ENCODE measurements at regions of chr11 and their contacts with region 1.

Region 1: GRCh38 chr11:62694455-62695167 is 5.3 kb upstream of the LRRN4CL start:
- DNase-seq: peak; percentile 68
- H3K4me3 ChIP-seq: no peak overlapping the region
- H3K27ac ChIP-seq: no peak overlapping the region
- H3K4me1 ChIP-seq: no peaks in the 10 kb centered on the region
- H3K27me3 ChIP-seq: no peaks in the 10 kb centered on the region
- CTCF ChIP-seq: peak; percentile 80 to 83
- POLR2A ChIP-seq: no peak

Region 2: GRCh38 chr11:61756452-61757212 is 938.0 kb before region 1 on chr11:
- CTCF ChIA-PET with region 1: no interaction called
- POLR2A ChIA-PET with region 1: no interaction called
- dilution Hi-C with region 1: no loop called
- intact Hi-C with region 1: no loop called
- DNase-seq: peak; percentile 14
- H3K4me3 ChIP-seq: no peak overlapping the region
- H3K27ac ChIP-seq: no peak overlapping the region
- H3K4me1 ChIP-seq: peaks cover 12% of the 10 kb centered on the region
- H3K27me3 ChIP-seq: no peaks in the 10 kb centered on the region
- CTCF ChIP-seq: no peak
- POLR2A ChIP-seq: no peak

Region 3: DNA sequence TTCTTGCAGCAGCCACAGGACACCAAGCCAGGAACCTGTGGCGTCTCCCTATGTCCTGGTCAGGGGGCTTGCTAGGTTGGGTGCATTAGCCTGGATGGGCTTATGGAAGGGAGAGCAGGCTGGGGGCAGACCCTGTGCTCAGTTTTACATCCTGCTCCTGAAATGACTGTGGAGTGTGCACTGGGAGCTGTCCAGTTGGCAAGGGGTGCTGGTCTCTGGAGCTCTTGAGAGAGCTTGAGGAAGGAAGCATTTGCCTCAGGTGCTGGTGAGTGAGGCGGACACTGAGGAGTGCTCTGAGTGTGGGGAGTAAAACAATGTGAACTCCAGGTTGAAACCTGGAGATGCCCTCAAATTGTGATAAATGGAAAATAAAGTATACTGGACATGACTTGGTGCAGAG is 399.1 kb before region 1 on chr11:
- CTCF ChIA-PET with region 1: no interaction called
- POLR2A ChIA-PET with region 1: no interaction called
- dilution Hi-C with region 1: no loop called
- intact Hi-C with region 1: no loop called
- DNase-seq: peak; percentile 45
- H3K4me3 ChIP-seq: no peak overlapping the region
- H3K27ac ChIP-seq: no peak overlapping the region
- H3K4me1 ChIP-seq: no peaks in the 10 kb centered on the region
- H3K27me3 ChIP-seq: peaks cover 9 to 10% of the 10 kb centered on the region in 2 experiments
- CTCF ChIP-seq: no peak
- POLR2A ChIP-seq: no peak

Region 4: GRCh38 chr11:62678770-62679696 is 15.6 kb before region 1 on chr11 and contains the start of gene UBXN1:
- CTCF ChIA-PET with region 1: interaction called, 118 read pairs
- POLR2A ChIA-PET with region 1: no interaction called
- dilution Hi-C with region 1: no loop called
- intact Hi-C with region 1: loop called (anchors 2 kb)
- DNase-seq: peak; percentile 89
- H3K4me3 ChIP-seq: peak within 1 kb of the TSS; percentile 76 to 93 (median 79)
- H3K27ac ChIP-seq: peak within 1 kb of the TSS; percentile 74
- H3K4me1 ChIP-seq: peaks cover 11% of the 10 kb centered on the region
- H3K27me3 ChIP-seq: no peaks in the 10 kb centered on the region
- CTCF ChIP-seq: no peak
- POLR2A ChIP-seq: peak; percentile 84
- total RNA-seq, gene UBXN1: 112 and 113 TPM in 2 replicates

Measured in endothelial cell of umbilical vein (primary cell).